ENCODE measurements at regions of chr19 and their contacts with region 1.

Region 1: GRCh38 chr19:11482384-11483050 is 1.7 kb upstream of the ELAVL3 start:
- DNase-seq: peak; percentile 92
- H3K4me3 ChIP-seq: peak overlapping the region; percentile 44
- H3K27ac ChIP-seq: peak overlapping the region; percentile 55
- H3K4me1 ChIP-seq: peaks cover 21% of the 10 kb centered on the region
- H3K27me3 ChIP-seq: peaks cover 21% of the 10 kb centered on the region
- CTCF ChIP-seq: peak; percentile 86

Region 2: GRCh38 chr19:11137542-11138384 is 344.8 kb before region 1 on chr19:
- CTCF ChIA-PET with region 1: interaction called, 3 read pairs
- POLR2A ChIA-PET with region 1: no interaction called
- intact Hi-C with region 1: loop called (anchors 2 kb)
- DNase-seq: peak; percentile 98
- H3K4me3 ChIP-seq: peak overlapping the region; percentile 23
- H3K27ac ChIP-seq: peak overlapping the region; percentile 81
- H3K4me1 ChIP-seq: peaks cover 35% of the 10 kb centered on the region
- H3K27me3 ChIP-seq: no peaks in the 10 kb centered on the region
- CTCF ChIP-seq: peak; percentile 86

Region 3: DNA sequence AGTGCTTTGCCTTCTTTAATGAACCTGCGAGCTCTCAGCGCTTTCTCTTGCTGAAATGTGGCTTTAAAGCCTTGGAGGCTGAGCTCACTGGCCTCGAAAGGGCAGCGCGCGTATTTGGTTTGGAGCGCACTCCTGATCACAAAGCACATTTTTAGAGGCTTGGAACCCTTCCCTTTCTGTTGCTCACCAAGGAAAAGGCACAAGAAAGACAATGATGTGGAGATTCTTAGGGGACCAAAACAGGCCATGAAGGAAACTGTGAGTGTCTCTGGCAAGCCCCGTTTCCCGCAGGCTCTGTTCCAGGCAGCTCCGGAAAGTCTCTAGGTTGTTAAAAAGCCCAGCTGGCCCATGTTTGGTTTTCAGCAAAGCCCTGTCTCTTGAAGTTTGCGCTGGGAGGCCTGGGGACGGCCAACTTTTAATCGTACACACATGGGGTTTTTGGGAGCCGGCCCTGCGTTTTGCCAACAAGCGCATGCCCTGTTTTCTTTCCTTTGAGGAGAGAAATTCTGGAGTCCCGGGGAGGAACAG is 317.6 kb before region 1 on chr19:
- CTCF ChIA-PET with region 1: no interaction called
- POLR2A ChIA-PET with region 1: no interaction called
- intact Hi-C with region 1: no loop called
- DNase-seq: no peak
- H3K4me3 ChIP-seq: no peak overlapping the region
- H3K27ac ChIP-seq: peak overlapping the region; percentile 22
- H3K4me1 ChIP-seq: no peaks in the 10 kb centered on the region
- H3K27me3 ChIP-seq: no peaks in the 10 kb centered on the region
- CTCF ChIP-seq: no peak

Region 4: DNA sequence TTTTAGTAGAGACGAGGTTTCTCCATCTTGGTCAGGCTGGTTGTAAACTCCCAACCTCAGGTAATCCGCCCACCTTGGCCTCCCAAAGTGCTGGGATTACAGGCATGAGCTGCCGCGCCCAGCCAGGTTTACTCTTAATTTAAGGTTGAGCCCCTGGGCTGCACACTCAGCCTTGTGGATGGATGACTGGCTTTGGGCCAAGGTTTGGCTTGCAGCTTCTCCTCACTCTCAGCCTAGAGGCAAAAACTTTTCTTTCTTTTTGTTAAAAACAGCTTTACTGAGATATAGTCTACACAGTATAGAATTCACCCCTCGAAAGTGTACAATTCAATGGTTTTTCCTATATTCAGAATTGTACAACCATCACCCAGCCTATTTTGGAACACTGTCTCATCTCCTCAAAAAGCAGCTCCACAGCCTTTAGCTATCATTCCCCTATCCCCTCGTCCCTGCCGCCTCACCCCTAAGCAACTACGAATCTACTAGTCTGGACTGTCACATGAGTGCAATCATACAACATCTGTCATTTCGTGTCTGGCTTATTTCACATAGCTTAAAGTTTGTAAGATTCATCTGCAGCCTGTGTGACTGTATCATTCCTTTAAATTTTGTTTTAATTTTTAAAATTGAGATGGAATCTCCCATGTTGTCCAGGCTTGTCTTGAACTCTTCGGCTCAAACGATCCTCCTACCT is 201.0 kb before region 1 on chr19:
- CTCF ChIA-PET with region 1: no interaction called
- POLR2A ChIA-PET with region 1: interaction called, 10 read pairs
- intact Hi-C with region 1: no loop called
- DNase-seq: no peak
- H3K4me3 ChIP-seq: no peak overlapping the region
- H3K27ac ChIP-seq: no peak overlapping the region
- H3K4me1 ChIP-seq: peaks cover 4% of the 10 kb centered on the region
- H3K27me3 ChIP-seq: no peaks in the 10 kb centered on the region
- CTCF ChIP-seq: no peak

Region 5: DNA sequence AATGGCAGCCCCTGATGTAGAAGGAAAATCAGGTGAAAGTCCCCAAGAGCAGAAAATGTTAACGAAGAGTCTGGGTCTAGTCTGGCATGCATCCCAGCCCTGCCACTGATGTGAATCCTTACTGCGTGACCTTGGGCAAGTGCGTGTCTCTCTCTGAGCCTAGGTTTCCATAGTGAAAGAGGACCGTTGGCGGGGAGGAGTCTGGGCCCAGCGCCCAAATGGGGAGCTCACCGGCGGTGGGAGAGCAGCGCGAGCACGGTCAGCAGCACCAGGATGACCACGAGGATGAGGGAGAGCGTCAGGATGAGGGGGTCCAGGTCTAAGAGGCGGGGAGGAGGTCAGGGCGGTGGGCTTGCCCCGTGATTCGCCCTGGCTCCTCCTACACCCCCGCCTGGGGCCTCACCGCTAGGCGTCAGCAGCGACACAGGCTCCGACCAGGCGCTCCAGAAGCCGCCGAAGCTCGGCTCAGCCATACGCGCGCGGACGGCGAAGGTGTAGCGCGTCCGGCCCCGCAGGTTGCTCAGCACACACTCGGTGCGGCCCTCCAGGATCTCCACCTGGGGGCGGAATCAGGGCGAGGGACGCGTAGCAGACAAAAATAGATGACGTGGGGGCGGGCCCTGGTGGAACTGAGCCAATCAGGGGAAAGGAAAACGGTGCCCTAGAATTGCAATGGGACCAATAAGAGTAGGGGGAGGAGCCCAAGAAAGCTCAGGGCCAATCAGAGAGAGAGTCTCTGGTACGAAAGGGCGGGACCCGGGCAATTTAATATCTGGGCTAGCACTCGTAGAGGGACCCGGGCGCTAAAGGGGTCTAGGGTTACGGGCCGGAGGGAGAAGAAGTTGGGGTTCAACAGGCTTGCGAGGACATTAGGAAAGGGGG is 101.6 kb before region 1 on chr19:
- CTCF ChIA-PET with region 1: interaction called, 8 read pairs
- POLR2A ChIA-PET with region 1: no interaction called
- intact Hi-C with region 1: loop called (anchors 1 kb)
- DNase-seq: peak; percentile 99
- H3K4me3 ChIP-seq: peak overlapping the region; percentile 53
- H3K27ac ChIP-seq: peak overlapping the region; percentile 34
- H3K4me1 ChIP-seq: peaks cover 26% of the 10 kb centered on the region
- H3K27me3 ChIP-seq: no peaks in the 10 kb centered on the region
- CTCF ChIP-seq: peak; percentile 83

Region 6: DNA sequence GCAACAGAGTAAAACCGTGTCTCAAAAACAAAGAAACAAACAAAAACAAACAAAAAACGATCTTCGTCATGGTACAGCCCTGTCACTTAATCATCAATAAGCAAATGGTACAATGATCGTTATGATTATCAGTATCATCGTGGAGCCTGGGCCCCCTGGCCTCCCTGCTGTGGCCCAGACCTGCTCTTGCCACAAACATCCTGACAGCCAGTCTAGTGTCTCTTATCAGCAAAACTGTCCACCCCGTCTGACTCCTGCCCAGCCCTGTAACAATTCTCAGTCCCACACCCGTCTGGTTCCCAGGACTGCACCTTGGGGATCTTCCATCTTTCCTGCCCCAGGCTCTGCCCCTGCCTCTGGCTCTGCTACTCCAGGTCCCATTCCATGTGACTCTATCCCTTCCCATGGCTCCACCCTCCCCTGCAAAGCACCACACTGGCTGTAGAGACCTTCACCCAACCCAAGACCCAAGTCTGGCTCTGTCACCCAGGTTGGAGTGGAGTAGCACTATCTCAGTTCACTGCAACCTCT is 17.4 kb after region 1 on chr19:
- CTCF ChIA-PET with region 1: no interaction called
- POLR2A ChIA-PET with region 1: no interaction called
- intact Hi-C with region 1: no loop called
- DNase-seq: no peak
- H3K4me3 ChIP-seq: no peak overlapping the region
- H3K27ac ChIP-seq: no peak overlapping the region
- H3K4me1 ChIP-seq: no peaks in the 10 kb centered on the region
- H3K27me3 ChIP-seq: no peaks in the 10 kb centered on the region
- CTCF ChIP-seq: no peak

Measured in A673 (cell line).